ENCODE measurements at regions of chr1 and their contacts with region 1.

Region 1: GRCh38 chr1:207103892-207104373 is at the start of gene C4BPA:
- DNase-seq: peak; percentile 90
- ATAC-seq: peak; percentile 97
- H3K4me3 ChIP-seq: no peak within 1 kb of the TSS
- H3K27ac ChIP-seq: peak within 1 kb of the TSS; percentile 52
- H3K4me1 ChIP-seq: peaks cover 36% of the 10 kb centered on the region
- H3K27me3 ChIP-seq: no peaks in the 10 kb centered on the region
- CTCF ChIP-seq: no peak
- EP300 ChIP-seq: peak in 1 of 2 experiments; percentile 51; a peak in 2 of 4 replicates
- POLR2A ChIP-seq: no peak
- RAD21 ChIP-seq: no peak
- total RNA-seq, gene C4BPA: 18.7 and 32.1 TPM in 2 replicates

Region 2: DNA sequence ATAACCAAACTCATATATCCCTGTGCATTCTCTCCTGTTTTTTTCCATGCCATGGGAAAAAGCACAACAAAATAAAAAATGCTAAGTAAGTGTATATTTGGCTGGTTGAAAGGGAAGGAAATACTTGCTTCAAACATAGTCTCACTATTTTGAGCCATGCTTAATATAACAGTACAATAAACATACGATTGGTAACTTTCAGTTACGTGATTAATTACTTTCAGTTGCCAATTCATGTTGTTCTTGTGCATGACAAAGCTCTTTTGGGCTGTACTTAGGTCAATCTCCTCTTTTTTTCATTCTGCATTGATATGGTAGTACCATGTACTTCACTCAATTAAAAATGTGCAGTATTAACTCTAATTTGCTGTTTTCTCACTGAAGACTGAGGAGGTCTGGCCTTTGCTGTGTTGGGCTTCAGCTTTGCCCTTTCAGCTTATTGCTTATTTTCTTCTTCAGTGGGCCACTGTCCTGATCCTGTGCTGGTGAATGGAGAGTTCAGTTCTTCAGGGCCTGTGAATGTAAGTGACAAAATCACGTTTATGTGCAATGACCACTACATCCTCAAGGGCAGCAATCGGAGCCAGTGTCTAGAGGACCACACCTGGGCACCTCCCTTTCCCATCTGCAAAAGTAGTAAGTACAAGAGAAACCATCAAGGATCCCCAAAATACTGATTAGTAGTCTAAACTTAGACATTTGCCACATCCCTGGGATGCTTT is 12.6 kb before region 1 on chr1:
- CTCF ChIA-PET with region 1: no interaction called
- POLR2A ChIA-PET with region 1: interaction called, 26 read pairs
- in situ Hi-C with region 1: no loop called
- intact Hi-C with region 1: loop called (anchors 2 kb)
- DNase-seq: peak; percentile 7
- ATAC-seq: no peak
- H3K4me3 ChIP-seq: peak overlapping the region; percentile 70 to 94 (median 75); a peak in 4 of 6 replicates
- H3K27ac ChIP-seq: peak overlapping the region; percentile 3
- H3K4me1 ChIP-seq: peaks cover 45% of the 10 kb centered on the region
- H3K27me3 ChIP-seq: no peaks in the 10 kb centered on the region; a peak in 1 of 5 replicates
- CTCF ChIP-seq: no peak
- EP300 ChIP-seq: no peak
- POLR2A ChIP-seq: no peak
- RAD21 ChIP-seq: no peak

Region 3: GRCh38 chr1:207115269-207115668 is 11.3 kb after region 1 on chr1:
- CTCF ChIA-PET with region 1: no interaction called
- POLR2A ChIA-PET with region 1: no interaction called
- in situ Hi-C with region 1: no loop called
- intact Hi-C with region 1: no loop called
- DNase-seq: no peak
- ATAC-seq: no peak
- H3K4me3 ChIP-seq: no peak overlapping the region
- H3K27ac ChIP-seq: no peak overlapping the region
- H3K4me1 ChIP-seq: no peaks in the 10 kb centered on the region
- H3K27me3 ChIP-seq: no peaks in the 10 kb centered on the region; a peak in 1 of 5 replicates
- CTCF ChIP-seq: no peak
- EP300 ChIP-seq: no peak
- POLR2A ChIP-seq: no peak
- RAD21 ChIP-seq: no peak

Region 4: DNA sequence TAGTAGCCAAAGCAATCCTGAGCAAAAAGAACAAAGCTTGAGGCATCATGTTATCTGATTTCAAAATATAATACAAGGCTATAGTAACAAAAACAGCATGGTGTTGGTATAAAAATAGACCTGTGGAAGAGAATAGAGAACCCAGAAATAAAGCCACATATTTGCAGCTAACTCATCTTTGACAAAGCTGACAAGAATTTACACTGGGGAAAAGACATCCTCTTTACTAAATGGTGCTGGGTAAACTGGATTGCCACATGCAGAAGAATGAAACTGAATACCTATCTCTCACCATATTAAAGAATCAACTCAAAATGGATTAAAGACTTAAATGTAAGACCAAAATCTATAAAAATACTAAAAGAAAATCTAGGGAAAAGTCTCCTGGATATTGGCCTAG is 158.0 kb after region 1 on chr1:
- CTCF ChIA-PET with region 1: no interaction called
- POLR2A ChIA-PET with region 1: no interaction called
- in situ Hi-C with region 1: no loop called
- intact Hi-C with region 1: no loop called
- DNase-seq: no peak
- ATAC-seq: no peak
- H3K4me3 ChIP-seq: no peak overlapping the region
- H3K27ac ChIP-seq: no peak overlapping the region
- H3K4me1 ChIP-seq: no peaks in the 10 kb centered on the region
- H3K27me3 ChIP-seq: no peaks in the 10 kb centered on the region
- CTCF ChIP-seq: no peak
- EP300 ChIP-seq: no peak
- POLR2A ChIP-seq: no peak
- RAD21 ChIP-seq: no peak

Measured in HepG2 (cell line).